B cell (primary cell): ENCODE measurements at regions of chr9 and their contacts with region 1.

Region 1: DNA sequence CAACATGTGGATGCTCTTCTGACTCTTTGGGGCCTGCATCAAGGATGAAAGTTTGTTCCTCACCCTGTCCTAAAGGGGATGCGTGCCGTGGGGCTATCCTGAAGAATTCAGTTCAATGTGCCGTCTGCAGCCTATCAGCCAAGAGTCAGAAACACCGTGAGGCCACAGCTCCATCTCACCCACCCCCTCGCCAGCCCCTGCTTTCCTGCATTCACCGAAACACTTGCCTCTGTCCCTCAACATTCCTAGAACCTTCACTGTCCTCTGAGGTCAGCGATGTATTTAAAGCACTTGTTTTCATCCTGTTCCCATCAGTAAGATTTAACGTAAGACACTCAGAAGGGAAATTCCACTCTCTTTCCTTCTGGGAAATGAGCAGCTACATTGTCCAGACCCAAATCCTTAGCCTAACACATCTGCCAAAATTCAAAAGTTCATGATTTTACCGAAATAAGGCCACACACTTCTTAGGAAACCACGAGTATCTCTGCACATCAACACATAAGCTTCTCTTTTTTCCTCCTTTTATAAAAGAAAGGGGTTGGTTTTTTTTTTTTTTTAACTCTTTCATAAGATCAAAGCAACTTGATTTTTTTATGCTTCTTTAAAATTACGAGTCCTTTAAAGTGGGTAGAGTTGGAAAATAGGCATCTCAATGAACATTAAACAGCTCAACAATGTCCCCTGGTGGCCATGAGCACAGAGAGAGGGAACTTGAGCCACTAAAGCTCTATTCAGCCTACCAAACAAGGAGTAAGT is 100.7 kb downstream of the SUSD1 start:
- DNase-seq: peak; percentile 82
- ATAC-seq: peak; percentile 80
- H3K4me3 ChIP-seq: peak overlapping the region in 1 of 5 experiments; percentile 9
- H3K4me3 Mint-ChIP-seq: peak overlapping the region; percentile 74
- H3K27ac ChIP-seq: peak overlapping the region; percentile 16 to 38
- H3K27ac Mint-ChIP-seq: peak overlapping the region; percentile 77
- H3K4me1 ChIP-seq: peaks cover 39 to 72% of the 10 kb centered on the region in 2 donors
- H3K4me1 Mint-ChIP-seq: peaks cover 65% of the 10 kb centered on the region
- H3K27me3 ChIP-seq: no peaks in the 10 kb centered on the region
- H3K27me3 Mint-ChIP-seq: no peaks in the 10 kb centered on the region
- CTCF ChIP-seq: peak; percentile 99

Region 2: GRCh38 chr9:111766066-111766465 is 308.4 kb before region 1 on chr9:
- CTCF ChIA-PET with region 1: interaction called, 274 read pairs
- POLR2A ChIA-PET with region 1: no interaction called
- intact Hi-C with region 1: no loop called
- DNase-seq: no peak
- ATAC-seq: no peak
- H3K4me3 ChIP-seq: no peak overlapping the region
- H3K4me3 Mint-ChIP-seq: no peak overlapping the region
- H3K27ac ChIP-seq: no peak overlapping the region
- H3K27ac Mint-ChIP-seq: no peak overlapping the region
- H3K4me1 ChIP-seq: no peaks in the 10 kb centered on the region
- H3K4me1 Mint-ChIP-seq: no peaks in the 10 kb centered on the region
- H3K27me3 ChIP-seq: no peaks in the 10 kb centered on the region
- H3K27me3 Mint-ChIP-seq: no peaks in the 10 kb centered on the region
- CTCF ChIP-seq: no peak

Region 3: DNA sequence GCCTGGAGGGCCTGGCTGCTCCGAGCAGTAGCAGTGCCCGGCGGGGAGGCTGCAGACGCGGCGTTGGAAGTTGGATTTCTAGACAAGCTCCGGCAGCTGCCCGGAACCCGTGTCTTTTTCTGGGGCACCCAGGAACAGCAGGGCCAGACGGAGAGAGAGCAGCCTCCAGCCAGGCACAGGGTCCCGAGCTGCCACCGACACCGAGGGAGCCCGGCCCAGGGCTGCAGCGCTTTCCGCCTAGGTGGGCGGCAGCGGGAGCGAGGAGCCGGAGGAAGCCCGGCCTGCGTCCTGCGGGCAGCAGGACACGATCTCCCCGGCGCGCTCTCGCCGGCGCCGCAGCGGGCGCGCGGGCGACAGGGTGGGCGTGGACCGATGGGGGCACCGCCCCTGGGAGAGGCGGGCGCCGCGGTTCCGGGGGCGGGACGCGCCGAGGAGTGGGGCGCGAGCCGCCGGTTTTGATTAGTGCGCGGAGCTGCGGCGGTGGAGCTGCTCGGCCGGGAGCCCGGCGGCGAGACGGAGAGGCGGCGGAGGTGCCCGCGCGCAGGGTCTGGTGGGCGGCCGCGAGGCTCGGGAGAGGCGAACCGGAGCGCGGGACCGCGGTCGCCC is 178.0 kb before region 1 on chr9 and contains the start of gene UGCG:
- CTCF ChIA-PET with region 1: interaction called, 34 read pairs
- POLR2A ChIA-PET with region 1: interaction called, 4 read pairs
- intact Hi-C with region 1: loop called (anchors 1 kb)
- DNase-seq: peak; percentile 93
- ATAC-seq: peak; percentile 85
- H3K4me3 ChIP-seq: peak within 1 kb of the TSS; percentile 70 to 95 (median 91)
- H3K4me3 Mint-ChIP-seq: peak within 1 kb of the TSS; percentile 94
- H3K27ac ChIP-seq: peak within 1 kb of the TSS; percentile 54 to 84
- H3K27ac Mint-ChIP-seq: peak within 1 kb of the TSS; percentile 91
- H3K4me1 ChIP-seq: peaks cover 42 to 51% of the 10 kb centered on the region in 2 donors
- H3K4me1 Mint-ChIP-seq: peaks cover 12% of the 10 kb centered on the region
- H3K27me3 ChIP-seq: no peaks in the 10 kb centered on the region
- H3K27me3 Mint-ChIP-seq: no peaks in the 10 kb centered on the region
- CTCF ChIP-seq: no peak
- total RNA-seq, gene UGCG: 53.5 and 54.1 TPM in 2 replicates

Region 4: GRCh38 chr9:111945216-111945615 is 129.2 kb before region 1 on chr9:
- CTCF ChIA-PET with region 1: interaction called, 10 read pairs
- POLR2A ChIA-PET with region 1: no interaction called
- intact Hi-C with region 1: no loop called
- DNase-seq: peak; percentile 64
- ATAC-seq: peak; percentile 86
- H3K4me3 ChIP-seq: peak overlapping the region in 1 of 5 experiments; percentile 27
- H3K4me3 Mint-ChIP-seq: peak overlapping the region; percentile 73
- H3K27ac ChIP-seq: no peak overlapping the region
- H3K27ac Mint-ChIP-seq: peak overlapping the region; percentile 67
- H3K4me1 ChIP-seq: peaks cover 29 to 38% of the 10 kb centered on the region in 2 donors
- H3K4me1 Mint-ChIP-seq: peaks cover 40% of the 10 kb centered on the region
- H3K27me3 ChIP-seq: no peaks in the 10 kb centered on the region
- H3K27me3 Mint-ChIP-seq: no peaks in the 10 kb centered on the region
- CTCF ChIP-seq: no peak

Region 5: DNA sequence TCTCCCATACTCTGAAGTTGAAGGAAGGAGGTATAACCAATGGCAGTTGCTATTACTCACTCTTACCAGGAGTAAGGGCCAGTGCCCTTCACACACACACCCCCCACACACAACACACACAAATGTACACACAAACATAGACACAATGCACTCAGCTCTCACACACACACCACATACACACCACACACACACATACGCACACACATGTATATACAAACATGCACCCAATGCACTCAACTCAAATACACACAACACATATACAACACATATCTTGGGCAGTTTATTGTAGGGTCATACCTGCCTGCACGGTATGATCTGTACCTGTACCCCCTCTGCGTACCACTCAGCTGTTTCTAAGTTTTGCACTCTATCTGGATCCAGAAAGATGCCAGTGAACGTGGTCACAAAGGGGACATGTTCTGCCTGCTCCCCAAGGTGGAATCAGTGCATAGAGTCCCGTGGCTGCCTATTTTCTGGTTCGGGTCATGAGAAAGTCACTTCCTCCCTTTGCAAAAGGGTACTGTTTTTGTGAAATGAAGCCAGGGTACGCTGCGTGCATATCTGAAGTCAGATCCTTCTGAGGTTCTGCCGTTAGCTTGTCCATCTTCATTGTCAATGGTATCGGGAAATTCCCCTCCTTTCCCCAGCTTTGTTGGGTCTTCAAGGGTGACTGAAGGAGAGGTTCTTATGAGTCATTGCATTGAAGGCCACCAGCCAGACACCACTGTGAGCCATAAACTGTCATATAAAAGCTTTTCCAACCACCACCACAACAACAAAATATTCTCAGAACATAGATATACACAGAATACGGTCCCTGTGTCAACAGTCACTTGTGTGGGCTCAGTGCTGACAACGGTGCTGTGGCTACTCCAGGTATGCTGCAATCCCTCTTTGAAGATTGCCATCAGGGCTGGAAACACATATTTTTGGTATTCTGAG is 45.9 kb before region 1 on chr9:
- CTCF ChIA-PET with region 1: interaction called, 17 read pairs
- POLR2A ChIA-PET with region 1: interaction called, 3 read pairs
- intact Hi-C with region 1: loop called (anchors 5 kb)
- DNase-seq: peak; percentile 56
- ATAC-seq: peak; percentile 53
- H3K4me3 ChIP-seq: no peak overlapping the region
- H3K4me3 Mint-ChIP-seq: peak overlapping the region; percentile 67
- H3K27ac ChIP-seq: peak overlapping the region in 1 of 2 donors; percentile 87
- H3K27ac Mint-ChIP-seq: peak overlapping the region; percentile 89
- H3K4me1 ChIP-seq: peaks cover 55% of the 10 kb centered on the region in 2 donors
- H3K4me1 Mint-ChIP-seq: peaks cover 55% of the 10 kb centered on the region
- H3K27me3 ChIP-seq: no peaks in the 10 kb centered on the region
- H3K27me3 Mint-ChIP-seq: no peaks in the 10 kb centered on the region
- CTCF ChIP-seq: no peak

Region 6: DNA sequence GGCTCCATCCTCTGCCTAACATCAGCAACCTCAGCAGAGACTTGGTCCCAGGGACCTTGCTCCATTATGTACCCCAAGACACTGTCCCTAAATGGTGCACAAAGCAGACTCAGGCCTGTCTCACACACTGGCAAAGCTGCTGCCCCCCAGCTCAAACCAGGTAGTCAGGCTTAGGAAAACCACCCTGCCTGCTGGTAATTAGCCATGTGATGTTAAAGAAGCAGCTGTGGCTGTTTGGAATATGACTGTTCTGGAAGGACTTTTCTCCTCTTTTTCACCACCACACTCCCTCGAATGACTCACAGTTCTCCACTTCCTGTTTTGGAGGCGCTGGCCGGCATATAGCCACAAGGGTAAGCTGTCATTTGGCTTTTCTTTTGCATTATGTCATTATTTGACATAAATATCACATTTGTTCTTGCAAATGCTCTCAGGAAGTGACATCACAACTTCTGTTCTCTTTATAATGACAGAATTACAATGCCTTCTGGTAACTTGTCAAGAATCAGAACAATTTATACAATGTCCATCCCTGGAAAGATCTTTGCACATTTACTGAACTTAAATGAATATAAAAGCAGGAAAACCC is 13.2 kb before region 1 on chr9:
- CTCF ChIA-PET with region 1: interaction called, 11 read pairs
- POLR2A ChIA-PET with region 1: interaction called, 4 read pairs
- intact Hi-C with region 1: no loop called
- DNase-seq: peak; percentile 57
- ATAC-seq: peak; percentile 68
- H3K4me3 ChIP-seq: no peak overlapping the region
- H3K4me3 Mint-ChIP-seq: no peak overlapping the region
- H3K27ac ChIP-seq: peak overlapping the region in 1 of 2 donors; percentile 0
- H3K27ac Mint-ChIP-seq: peak overlapping the region; percentile 82
- H3K4me1 ChIP-seq: peaks cover 25 to 51% of the 10 kb centered on the region in 2 donors
- H3K4me1 Mint-ChIP-seq: peaks cover 78% of the 10 kb centered on the region
- H3K27me3 ChIP-seq: no peaks in the 10 kb centered on the region
- H3K27me3 Mint-ChIP-seq: no peaks in the 10 kb centered on the region
- CTCF ChIP-seq: no peak